ENCODE measurements at regions of chr9 and their contacts with region 1.

Region 1: GRCh38 chr9:25025156-25025555 is 479.5 kb upstream of the IZUMO3 start:
- DNase-seq: no peak
- ATAC-seq: no peak
- H3K4me3 ChIP-seq: no peak overlapping the region
- H3K27ac ChIP-seq: no peak overlapping the region
- H3K4me1 ChIP-seq: no peaks in the 10 kb centered on the region
- H3K27me3 ChIP-seq: no peaks in the 10 kb centered on the region
- CTCF ChIP-seq: no peak

Region 2: GRCh38 chr9:24698881-24699518 is 326.2 kb before region 1 on chr9:
- intact Hi-C with region 1: no loop called
- DNase-seq: no peak
- ATAC-seq: no peak
- H3K4me3 ChIP-seq: no peak overlapping the region
- H3K27ac ChIP-seq: no peak overlapping the region
- H3K4me1 ChIP-seq: no peaks in the 10 kb centered on the region
- H3K27me3 ChIP-seq: no peaks in the 10 kb centered on the region
- CTCF ChIP-seq: no peak

Region 3: DNA sequence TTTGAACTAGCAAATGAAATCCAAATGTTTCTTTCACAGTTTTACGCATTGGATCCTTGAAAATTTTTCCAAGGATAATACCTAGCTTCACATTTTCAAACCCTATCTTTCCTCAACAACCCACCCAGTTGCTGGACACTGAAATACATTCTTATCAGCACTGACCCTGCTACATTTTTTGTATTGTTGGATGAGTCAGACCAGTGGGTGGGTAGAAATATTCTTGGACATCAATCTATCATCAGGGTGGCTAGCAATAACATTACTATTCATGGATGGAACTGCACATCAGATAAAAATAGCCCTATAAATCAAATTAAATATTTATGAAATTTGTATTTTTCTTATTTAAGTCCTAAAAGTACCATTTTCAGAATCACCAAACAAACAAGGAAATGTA is 72.1 kb before region 1 on chr9:
- intact Hi-C with region 1: no loop called
- DNase-seq: no peak
- ATAC-seq: no peak
- H3K4me3 ChIP-seq: no peak overlapping the region
- H3K27ac ChIP-seq: no peak overlapping the region
- H3K4me1 ChIP-seq: no peaks in the 10 kb centered on the region
- H3K27me3 ChIP-seq: no peaks in the 10 kb centered on the region
- CTCF ChIP-seq: no peak

Region 4: GRCh38 chr9:24986331-24986730 is 38.8 kb before region 1 on chr9:
- intact Hi-C with region 1: loop called in 1 of 10 experiments (anchors 5 kb)
- DNase-seq: no peak
- ATAC-seq: no peak
- H3K4me3 ChIP-seq: no peak overlapping the region
- H3K27ac ChIP-seq: no peak overlapping the region
- H3K4me1 ChIP-seq: no peaks in the 10 kb centered on the region
- H3K27me3 ChIP-seq: no peaks in the 10 kb centered on the region
- CTCF ChIP-seq: no peak

Region 5: GRCh38 chr9:25261445-25261844 is 236.3 kb after region 1 on chr9:
- intact Hi-C with region 1: no loop called
- DNase-seq: no peak
- ATAC-seq: no peak
- H3K4me3 ChIP-seq: no peak overlapping the region
- H3K27ac ChIP-seq: no peak overlapping the region
- H3K4me1 ChIP-seq: no peaks in the 10 kb centered on the region
- H3K27me3 ChIP-seq: no peaks in the 10 kb centered on the region
- CTCF ChIP-seq: no peak

Region 6: GRCh38 chr9:25322143-25322542 is 297.0 kb after region 1 on chr9:
- intact Hi-C with region 1: loop called in 1 of 10 experiments (anchors 10 kb)
- DNase-seq: no peak
- ATAC-seq: no peak
- H3K4me3 ChIP-seq: no peak overlapping the region
- H3K27ac ChIP-seq: no peak overlapping the region
- H3K4me1 ChIP-seq: no peaks in the 10 kb centered on the region
- H3K27me3 ChIP-seq: no peaks in the 10 kb centered on the region
- CTCF ChIP-seq: no peak